Activated CD4-positive, alpha-beta memory T cell treated with anti-CD3 and anti-CD28 coated beads for 36 hours (primary cell): ENCODE measurements at regions of chr11 and their contacts with region 1.

Region 1: GRCh38 chr11:125345421-125346178 is 150.5 kb downstream of the FEZ1 start:
- DNase-seq: peak; percentile 59
- H3K4me3 Mint-ChIP-seq: no peak overlapping the region
- H3K27ac Mint-ChIP-seq: no peak overlapping the region
- H3K4me1 Mint-ChIP-seq: no peaks in the 10 kb centered on the region
- H3K27me3 Mint-ChIP-seq: peaks cover 8% of the 10 kb centered on the region

Region 2: GRCh38 chr11:124961972-124962609 is 383.5 kb before region 1 on chr11:
- CTCF ChIA-PET with region 1: interaction called, 4 read pairs
- POLR2A ChIA-PET with region 1: no interaction called
- intact Hi-C with region 1: loop called (anchors 2 kb)
- DNase-seq: no peak
- H3K4me3 Mint-ChIP-seq: no peak overlapping the region
- H3K27ac Mint-ChIP-seq: no peak overlapping the region
- H3K4me1 Mint-ChIP-seq: no peaks in the 10 kb centered on the region
- H3K27me3 Mint-ChIP-seq: no peaks in the 10 kb centered on the region

Region 3: DNA sequence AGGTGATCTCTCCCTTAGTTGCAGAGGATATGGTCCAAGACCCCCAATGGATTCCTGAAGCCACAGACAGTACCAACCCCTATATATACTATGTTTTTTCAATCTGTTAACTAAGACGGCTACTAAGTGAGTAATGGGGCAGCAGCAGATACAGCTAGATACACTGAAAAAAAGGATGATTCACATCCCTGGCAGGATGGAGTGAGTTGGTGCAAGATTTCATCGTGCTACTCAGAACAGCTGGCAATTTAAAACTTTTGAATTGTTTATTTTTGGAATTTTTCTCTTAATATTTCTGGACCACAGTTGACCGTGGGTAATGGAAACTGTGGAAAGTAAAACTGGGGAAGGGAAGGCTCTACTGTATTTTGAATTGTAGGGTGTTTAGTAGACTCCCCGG is 217.2 kb before region 1 on chr11:
- CTCF ChIA-PET with region 1: no interaction called
- POLR2A ChIA-PET with region 1: no interaction called
- intact Hi-C with region 1: no loop called
- DNase-seq: no peak
- H3K4me3 Mint-ChIP-seq: no peak overlapping the region
- H3K27ac Mint-ChIP-seq: no peak overlapping the region
- H3K4me1 Mint-ChIP-seq: peaks cover 6% of the 10 kb centered on the region
- H3K27me3 Mint-ChIP-seq: peaks cover 35% of the 10 kb centered on the region

Region 4: DNA sequence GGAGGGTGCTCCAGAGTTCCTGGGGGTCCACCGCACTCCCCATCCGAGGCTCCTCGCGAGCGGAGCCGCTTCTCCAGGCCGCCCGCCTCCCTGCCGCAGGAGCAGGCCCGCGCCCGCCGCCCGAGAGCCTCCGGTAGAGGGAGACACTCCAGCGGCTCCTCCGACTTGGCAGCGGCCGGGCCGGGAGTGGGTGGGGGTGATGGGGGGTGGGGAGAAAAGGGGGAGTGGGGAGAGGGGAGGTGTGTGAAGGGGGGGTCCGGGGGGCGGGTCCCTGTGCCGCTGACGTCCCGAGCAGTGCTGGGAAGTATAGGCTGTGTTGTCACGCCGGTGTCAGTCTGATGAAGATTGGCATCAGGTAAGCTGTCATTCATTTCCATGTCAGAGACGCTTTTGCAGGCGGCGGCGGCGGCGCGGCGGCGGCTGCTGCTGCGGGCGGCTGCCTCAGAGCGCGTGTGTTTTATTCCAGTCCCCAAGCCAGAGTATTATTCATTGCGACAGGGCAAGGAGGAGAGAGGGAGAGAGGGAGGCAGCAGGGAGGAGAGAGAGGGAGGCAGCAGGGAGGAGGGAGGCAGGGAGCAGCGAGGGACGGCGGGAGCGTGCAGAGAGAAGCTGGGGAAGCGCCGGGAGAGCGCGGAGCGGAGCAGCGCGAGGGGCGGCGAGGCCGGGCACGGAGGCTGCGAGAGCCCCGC is 181.0 kb before region 1 on chr11 and contains the start of gene PKNOX2:
- CTCF ChIA-PET with region 1: interaction called, 8 read pairs
- POLR2A ChIA-PET with region 1: no interaction called
- intact Hi-C with region 1: loop called (anchors 1 kb)
- DNase-seq: peak; percentile 70
- H3K4me3 Mint-ChIP-seq: peak within 1 kb of the TSS; percentile 77
- H3K27ac Mint-ChIP-seq: no peak within 1 kb of the TSS
- H3K4me1 Mint-ChIP-seq: peaks cover 17% of the 10 kb centered on the region
- H3K27me3 Mint-ChIP-seq: peaks cover 48% of the 10 kb centered on the region
- total RNA-seq, gene PKNOX2: not detected

Region 5: DNA sequence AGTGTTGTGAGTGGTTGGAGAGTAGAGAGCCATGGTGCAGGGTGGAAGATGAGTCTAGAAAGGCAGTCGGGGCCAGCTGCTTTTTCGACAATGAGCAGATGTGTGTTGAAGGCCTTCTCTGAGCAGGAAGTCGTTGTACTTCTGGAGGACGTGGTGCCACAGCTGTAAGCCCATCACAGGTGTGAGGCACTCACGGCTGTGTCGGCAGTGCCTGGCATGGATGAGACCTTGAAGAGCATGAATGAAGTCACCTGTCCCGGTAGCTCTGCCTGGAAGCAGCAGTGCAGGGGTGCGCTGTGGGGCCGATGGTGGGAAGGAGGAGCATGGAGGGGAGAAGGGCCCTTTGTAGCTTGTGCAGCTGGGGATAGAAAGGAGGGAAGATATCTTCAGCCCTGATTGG is 15.8 kb before region 1 on chr11:
- CTCF ChIA-PET with region 1: interaction called, 12 read pairs
- POLR2A ChIA-PET with region 1: no interaction called
- intact Hi-C with region 1: no loop called
- DNase-seq: no peak
- H3K4me3 Mint-ChIP-seq: no peak overlapping the region
- H3K27ac Mint-ChIP-seq: no peak overlapping the region
- H3K4me1 Mint-ChIP-seq: no peaks in the 10 kb centered on the region
- H3K27me3 Mint-ChIP-seq: peaks cover 8% of the 10 kb centered on the region

Region 6: GRCh38 chr11:125358254-125358840 is 12.7 kb after region 1 on chr11:
- CTCF ChIA-PET with region 1: interaction called, 16 read pairs
- POLR2A ChIA-PET with region 1: no interaction called
- intact Hi-C with region 1: no loop called
- DNase-seq: no peak
- H3K4me3 Mint-ChIP-seq: no peak overlapping the region
- H3K27ac Mint-ChIP-seq: no peak overlapping the region
- H3K4me1 Mint-ChIP-seq: no peaks in the 10 kb centered on the region
- H3K27me3 Mint-ChIP-seq: no peaks in the 10 kb centered on the region

Region 7: DNA sequence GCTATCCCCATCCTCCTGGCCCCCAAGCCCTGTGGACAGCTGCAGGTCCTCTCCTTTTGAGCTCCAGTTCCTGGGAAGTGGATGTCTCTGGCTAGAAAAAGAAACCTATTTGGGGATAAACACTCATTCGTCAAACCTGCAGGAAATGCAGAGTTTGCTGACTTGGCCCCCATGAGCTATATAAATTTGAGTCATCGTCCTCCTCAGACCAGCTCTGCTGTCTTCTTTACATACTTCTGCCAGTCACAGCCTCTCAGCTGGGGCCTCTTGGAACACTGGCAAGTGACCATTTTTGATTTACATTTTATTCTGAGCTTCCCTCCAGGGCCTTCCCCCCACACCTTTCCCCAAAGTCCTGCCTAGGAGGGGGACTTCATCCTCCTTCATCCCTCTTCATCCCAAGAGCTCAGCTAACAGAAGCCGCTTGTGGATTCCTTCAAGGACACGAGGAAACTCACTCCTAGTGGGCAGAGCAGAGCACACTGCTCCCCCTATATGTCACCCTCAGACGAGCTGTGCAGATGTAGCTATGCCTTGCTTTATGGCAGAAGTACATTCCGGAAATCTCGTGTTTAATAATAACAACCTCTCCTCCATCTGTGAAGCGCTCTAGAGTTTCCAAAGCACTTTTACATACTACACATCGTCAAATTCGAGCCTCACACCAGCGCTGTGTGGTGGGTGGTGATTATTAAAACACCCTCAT is 18.7 kb after region 1 on chr11:
- CTCF ChIA-PET with region 1: interaction called, 16 read pairs
- POLR2A ChIA-PET with region 1: no interaction called
- intact Hi-C with region 1: no loop called
- DNase-seq: peak; percentile 12
- H3K4me3 Mint-ChIP-seq: no peak overlapping the region
- H3K27ac Mint-ChIP-seq: no peak overlapping the region
- H3K4me1 Mint-ChIP-seq: peaks cover 2% of the 10 kb centered on the region
- H3K27me3 Mint-ChIP-seq: peaks cover 5% of the 10 kb centered on the region

Region 8: GRCh38 chr11:125404776-125405435 is 59.3 kb after region 1 on chr11:
- CTCF ChIA-PET with region 1: interaction called, 21 read pairs
- POLR2A ChIA-PET with region 1: no interaction called
- intact Hi-C with region 1: no loop called
- DNase-seq: peak; percentile 79
- H3K4me3 Mint-ChIP-seq: no peak overlapping the region
- H3K27ac Mint-ChIP-seq: no peak overlapping the region
- H3K4me1 Mint-ChIP-seq: peaks cover 6% of the 10 kb centered on the region
- H3K27me3 Mint-ChIP-seq: peaks cover 48% of the 10 kb centered on the region